SK-N-SH (cell line): ENCODE measurements at regions of chr15 and their contacts with region 1.

Region 1: DNA sequence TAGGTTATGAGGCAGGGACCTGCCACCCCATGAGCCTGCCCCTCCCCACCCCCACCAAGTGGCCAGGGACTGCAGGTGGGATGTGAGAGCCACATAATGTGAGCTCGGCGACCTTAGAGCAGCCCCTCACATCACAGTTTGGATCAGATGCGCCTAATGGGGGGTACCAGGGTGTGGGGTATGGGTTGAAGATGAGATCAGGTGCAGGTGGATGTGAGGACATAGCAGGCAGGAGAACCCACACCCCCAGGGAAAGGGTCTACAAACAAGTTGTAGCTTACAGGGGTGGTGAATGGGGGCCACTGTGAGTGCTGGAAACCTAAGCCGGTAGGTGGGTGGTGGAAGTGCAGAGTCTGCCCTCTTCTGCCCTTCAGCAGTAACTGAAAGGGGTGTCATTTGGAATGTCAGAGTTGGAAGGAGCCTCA is 94.0 kb downstream of the CORO2B start:
- DNase-seq: no peak
- H3K4me3 ChIP-seq: no peak overlapping the region
- H3K27ac ChIP-seq: no peak overlapping the region
- H3K4me1 ChIP-seq: no peaks in the 10 kb centered on the region; a peak in 1 of 4 replicates
- H3K27me3 ChIP-seq: no peaks in the 10 kb centered on the region
- CTCF ChIP-seq: peak; percentile 23; the same call in 1 of the 2 replicates
- EP300 ChIP-seq: no peak
- RAD21 ChIP-seq: peak; percentile 60

Region 2: GRCh38 chr15:68421115-68421551 is 251.7 kb before region 1 on chr15:
- CTCF ChIA-PET with region 1: no interaction called
- POLR2A ChIA-PET with region 1: no interaction called
- DNase-seq: no peak
- H3K4me3 ChIP-seq: no peak overlapping the region
- H3K27ac ChIP-seq: no peak overlapping the region
- H3K4me1 ChIP-seq: no peaks in the 10 kb centered on the region; a peak in 1 of 4 replicates
- H3K27me3 ChIP-seq: no peaks in the 10 kb centered on the region
- CTCF ChIP-seq: no peak
- EP300 ChIP-seq: no peak
- RAD21 ChIP-seq: no peak

Region 3: GRCh38 chr15:68484696-68485400 is 187.9 kb before region 1 on chr15:
- CTCF ChIA-PET with region 1: no interaction called
- POLR2A ChIA-PET with region 1: no interaction called
- DNase-seq: no peak
- H3K4me3 ChIP-seq: no peak overlapping the region
- H3K27ac ChIP-seq: peak overlapping the region in 1 of 2 experiments; percentile 74; a peak in 2 of 4 replicates
- H3K4me1 ChIP-seq: peaks cover 0 to 15% of the 10 kb centered on the region in 2 experiments; a peak in 3 of 4 replicates
- H3K27me3 ChIP-seq: no peaks in the 10 kb centered on the region
- CTCF ChIP-seq: no peak
- EP300 ChIP-seq: no peak
- RAD21 ChIP-seq: no peak

Region 4: GRCh38 chr15:68559345-68560310 is 113.2 kb before region 1 on chr15:
- CTCF ChIA-PET with region 1: interaction called, 464 read pairs
- POLR2A ChIA-PET with region 1: interaction called, 6 read pairs
- DNase-seq: peak; percentile 93
- H3K4me3 ChIP-seq: peak overlapping the region; percentile 43 to 61
- H3K27ac ChIP-seq: no peak overlapping the region
- H3K4me1 ChIP-seq: peaks cover 0 to 7% of the 10 kb centered on the region in 2 experiments; a peak in 1 of 4 replicates
- H3K27me3 ChIP-seq: no peaks in the 10 kb centered on the region
- CTCF ChIP-seq: peak; percentile 91
- EP300 ChIP-seq: no peak
- RAD21 ChIP-seq: peak; percentile 79

Region 5: GRCh38 chr15:68599560-68600071 is 73.2 kb before region 1 on chr15:
- CTCF ChIA-PET with region 1: interaction called, 10 read pairs
- POLR2A ChIA-PET with region 1: no interaction called
- DNase-seq: peak; percentile 91
- H3K4me3 ChIP-seq: no peak overlapping the region
- H3K27ac ChIP-seq: peak overlapping the region; percentile 52 to 54
- H3K4me1 ChIP-seq: peaks cover 17 to 36% of the 10 kb centered on the region in 2 experiments; a peak in 3 of 4 replicates
- H3K27me3 ChIP-seq: no peaks in the 10 kb centered on the region
- CTCF ChIP-seq: no peak
- EP300 ChIP-seq: peak in 1 of 2 experiments; percentile 64; a peak in 1 of 4 replicates
- RAD21 ChIP-seq: peak; percentile 26

Region 6: GRCh38 chr15:68650901-68651709 is 21.7 kb before region 1 on chr15:
- CTCF ChIA-PET with region 1: interaction called, 17 read pairs
- POLR2A ChIA-PET with region 1: no interaction called
- DNase-seq: peak; percentile 62
- H3K4me3 ChIP-seq: no peak overlapping the region; a peak in 1 of 4 replicates
- H3K27ac ChIP-seq: no peak overlapping the region
- H3K4me1 ChIP-seq: peaks cover 0 to 19% of the 10 kb centered on the region in 2 experiments; a peak in 2 of 4 replicates
- H3K27me3 ChIP-seq: no peaks in the 10 kb centered on the region
- CTCF ChIP-seq: peak; percentile 64
- EP300 ChIP-seq: no peak
- RAD21 ChIP-seq: no peak

Region 7: GRCh38 chr15:68691705-68692104 is 18.9 kb after region 1 on chr15:
- CTCF ChIA-PET with region 1: interaction called, 69 read pairs
- POLR2A ChIA-PET with region 1: no interaction called
- DNase-seq: peak; percentile 76
- H3K4me3 ChIP-seq: no peak overlapping the region
- H3K27ac ChIP-seq: peak overlapping the region in 1 of 2 experiments; percentile 64; a peak in 2 of 4 replicates
- H3K4me1 ChIP-seq: peaks cover 0 to 14% of the 10 kb centered on the region in 2 experiments; a peak in 2 of 4 replicates
- H3K27me3 ChIP-seq: no peaks in the 10 kb centered on the region
- CTCF ChIP-seq: no peak
- EP300 ChIP-seq: peak in 1 of 2 experiments; percentile 51; a peak in 1 of 4 replicates
- RAD21 ChIP-seq: peak; percentile 8; the same call in 1 of the 2 replicates